Lower leg skin (tissue), 4 donors: ENCODE measurements at regions of chr12 and their contacts with region 1.

Region 1: DNA sequence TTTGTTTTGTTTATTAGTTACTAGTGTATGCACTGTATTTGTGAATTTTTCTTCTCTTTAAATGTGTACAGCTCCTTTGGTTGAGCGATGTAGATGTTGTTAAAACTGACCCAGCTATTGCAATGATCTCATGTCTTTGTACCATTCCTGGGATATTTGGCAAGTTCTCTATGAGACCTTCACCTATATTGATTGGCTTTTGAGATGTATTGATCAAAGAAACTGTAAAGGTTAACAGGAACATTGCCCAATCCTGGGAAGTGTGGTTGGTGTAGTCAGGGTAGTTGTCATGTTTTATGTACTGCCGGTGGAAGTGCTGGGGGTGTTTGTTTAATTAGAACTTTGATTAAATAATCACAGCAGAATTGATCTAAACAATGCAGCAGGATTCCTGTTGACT is 43.1 kb downstream of the ACSS3 start:
- DNase-seq: no peak
- H3K4me3 ChIP-seq: no peak overlapping the region
- CTCF ChIP-seq: no peak
- POLR2A ChIP-seq: no peak

Region 2: DNA sequence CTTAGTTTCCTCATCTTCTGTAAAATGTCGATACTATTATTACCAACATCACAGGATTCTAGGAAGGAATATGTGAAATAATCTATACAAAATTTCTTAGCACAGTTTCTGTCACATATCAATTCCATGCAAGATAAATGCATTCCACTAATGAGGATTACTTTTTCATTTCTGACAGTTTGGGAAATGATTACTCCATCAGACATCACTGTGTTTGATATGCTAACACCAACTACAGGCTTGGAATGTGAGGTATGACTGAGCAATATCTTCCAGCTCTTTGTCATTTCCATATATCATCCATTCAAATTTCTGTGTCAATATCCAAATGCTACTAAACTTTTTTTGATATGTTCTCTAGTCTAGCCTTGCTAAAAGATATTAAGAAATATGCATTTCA is 788.1 kb before region 1 on chr12:
- intact Hi-C with region 1: loop called (anchors 5 kb)
- DNase-seq: no peak
- H3K4me3 ChIP-seq: no peak overlapping the region
- CTCF ChIP-seq: no peak
- POLR2A ChIP-seq: no peak

Region 3: GRCh38 chr12:80968326-80968725 is 152.6 kb before region 1 on chr12:
- intact Hi-C with region 1: no loop called
- DNase-seq: no peak
- H3K4me3 ChIP-seq: no peak overlapping the region
- CTCF ChIP-seq: no peak
- POLR2A ChIP-seq: no peak